ENCODE measurements at regions of chr9 and their contacts with region 1.

Region 1: DNA sequence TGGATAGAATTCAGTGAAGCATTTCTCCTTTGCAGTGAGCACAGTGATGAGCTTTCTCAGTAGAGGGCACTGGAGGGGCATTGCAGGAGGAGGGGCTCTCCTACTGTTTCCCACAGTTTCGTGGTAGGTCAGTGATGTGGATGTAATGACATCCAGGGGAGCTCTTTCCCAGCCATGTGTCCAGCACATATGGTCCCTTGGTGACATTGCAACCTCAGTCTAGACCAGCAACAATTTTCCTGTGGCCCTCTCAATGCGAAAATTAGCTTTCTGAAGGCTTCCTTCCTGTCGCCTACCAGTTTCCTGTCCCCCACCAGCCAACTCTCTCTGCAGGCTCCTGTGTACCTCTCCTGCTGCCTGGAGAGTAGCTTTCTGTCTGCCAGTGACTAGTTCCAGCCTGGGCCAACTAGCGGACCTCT is 6.9 kb upstream of the PDCL start:
- DNase-seq: peak in 5 of 9 donors; percentile 33 to 45 (median 40)
- ATAC-seq: peak; percentile 71
- H3K4me3 ChIP-seq: peak overlapping the region; percentile 38
- H3K4me3 Mint-ChIP-seq: peak overlapping the region; percentile 62 to 88 (median 76)
- H3K27ac ChIP-seq: peak overlapping the region; percentile 48
- H3K27ac Mint-ChIP-seq: peak overlapping the region; percentile 80 to 94 (median 88)
- H3K4me1 ChIP-seq: peaks cover 6 to 11% of the 10 kb centered on the region in 2 donors
- H3K4me1 Mint-ChIP-seq: peaks cover 3 to 28% (median 18%) of the 10 kb centered on the region in 7 donors
- H3K27me3 ChIP-seq: no peaks in the 10 kb centered on the region
- H3K27me3 Mint-ChIP-seq: no peaks in the 10 kb centered on the region

Region 2: DNA sequence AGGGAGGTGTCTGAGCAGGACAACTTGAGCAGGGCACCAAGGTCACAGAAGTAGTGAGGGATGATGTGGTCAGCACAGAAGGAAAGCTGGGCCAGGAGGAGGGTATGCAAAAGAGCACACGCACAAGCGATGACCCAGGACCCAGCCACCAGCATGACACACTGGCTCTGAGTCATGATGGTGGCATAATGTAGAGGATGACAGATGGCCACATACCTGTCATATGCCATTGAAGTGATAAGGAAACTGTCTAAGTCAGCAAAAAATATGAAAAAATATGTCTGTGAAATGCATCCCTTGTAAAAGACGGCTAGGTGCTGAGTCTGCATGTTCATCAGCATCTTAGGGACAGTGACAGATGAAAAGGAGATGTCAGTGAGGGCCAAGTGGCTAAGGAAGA is 358.0 kb before region 1 on chr9:
- CTCF ChIA-PET with region 1: no interaction called
- POLR2A ChIA-PET with region 1: no interaction called
- intact Hi-C with region 1: no loop called
- DNase-seq: no peak
- ATAC-seq: no peak
- H3K4me3 ChIP-seq: no peak overlapping the region
- H3K4me3 Mint-ChIP-seq: no peak overlapping the region
- H3K27ac ChIP-seq: no peak overlapping the region
- H3K27ac Mint-ChIP-seq: no peak overlapping the region
- H3K4me1 ChIP-seq: no peaks in the 10 kb centered on the region
- H3K4me1 Mint-ChIP-seq: no peaks in the 10 kb centered on the region
- H3K27me3 ChIP-seq: no peaks in the 10 kb centered on the region
- H3K27me3 Mint-ChIP-seq: peaks cover 0 to 47% (median 9%) of the 10 kb centered on the region in 5 donors

Region 3: DNA sequence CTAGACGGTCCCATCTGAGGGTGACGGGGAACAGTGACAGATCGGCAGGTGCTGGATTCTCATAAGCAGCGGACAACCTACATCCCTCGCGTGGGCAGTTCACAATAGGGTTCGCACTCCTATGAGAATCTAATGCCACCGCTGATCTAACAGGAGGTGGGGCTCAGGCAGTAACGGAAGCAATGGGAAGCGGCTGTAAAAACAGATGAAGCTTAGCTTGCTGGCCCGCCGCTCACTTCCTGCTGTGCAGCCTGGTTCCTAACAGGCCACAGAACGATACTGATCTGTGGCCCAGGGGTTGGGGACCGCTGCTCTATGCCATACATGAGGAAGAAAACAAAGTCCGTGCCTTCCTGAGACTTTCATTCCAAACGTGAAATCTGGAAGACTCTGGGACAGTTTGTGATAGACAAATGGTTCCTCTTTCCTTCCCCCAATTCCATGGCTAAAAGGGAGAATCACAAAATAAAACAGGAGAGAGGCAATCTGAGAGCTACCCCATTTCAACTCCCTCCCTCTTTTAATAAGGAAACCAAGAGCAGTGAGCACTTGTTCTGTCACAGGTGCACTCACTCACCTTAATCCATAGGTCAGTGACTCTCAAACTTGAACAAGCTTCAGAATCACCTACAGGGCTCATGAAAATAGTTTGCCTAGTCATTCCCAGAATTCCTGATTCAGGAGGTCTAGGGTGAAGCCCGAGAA is 19.0 kb before region 1 on chr9:
- CTCF ChIA-PET with region 1: no interaction called
- POLR2A ChIA-PET with region 1: interaction called, 10 read pairs
- intact Hi-C with region 1: no loop called
- DNase-seq: peak in 8 of 9 donors; percentile 16 to 54 (median 46)
- ATAC-seq: peak; percentile 89
- H3K4me3 ChIP-seq: peak overlapping the region; percentile 29
- H3K4me3 Mint-ChIP-seq: peak overlapping the region; percentile 67 to 89 (median 81)
- H3K27ac ChIP-seq: peak overlapping the region; percentile 69
- H3K27ac Mint-ChIP-seq: peak overlapping the region; percentile 91 to 98 (median 97)
- H3K4me1 ChIP-seq: peaks cover 12% of the 10 kb centered on the region in 2 donors
- H3K4me1 Mint-ChIP-seq: peaks cover 19 to 53% (median 41%) of the 10 kb centered on the region in 7 donors
- H3K27me3 ChIP-seq: no peaks in the 10 kb centered on the region
- H3K27me3 Mint-ChIP-seq: no peaks in the 10 kb centered on the region

Region 4: DNA sequence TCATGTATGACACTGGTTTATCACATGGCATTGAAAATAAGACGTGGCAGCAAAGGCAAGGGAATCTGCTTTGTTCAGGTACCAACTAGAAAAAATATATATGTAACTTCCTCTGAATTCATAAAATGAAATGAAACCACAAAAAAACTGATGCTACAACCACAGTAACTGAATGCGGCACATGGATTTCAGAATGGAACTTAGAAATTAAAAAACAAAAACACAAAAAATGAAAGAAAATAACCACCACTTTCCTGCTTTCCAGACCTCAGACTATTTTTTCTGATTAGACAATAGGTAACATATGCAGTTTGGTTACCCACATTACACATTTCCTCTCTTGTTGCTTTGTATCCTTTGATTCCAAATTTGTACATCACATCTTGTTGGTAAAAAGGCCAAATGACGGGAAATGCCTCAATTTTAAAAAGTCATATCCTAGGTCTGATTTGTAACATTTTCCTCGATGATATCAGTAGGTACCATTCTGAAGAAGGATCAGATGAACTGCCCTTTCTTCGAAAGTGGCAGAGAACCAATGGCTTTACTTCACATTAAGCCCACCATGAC is 11.1 kb after region 1 on chr9:
- CTCF ChIA-PET with region 1: interaction called, 4 read pairs
- POLR2A ChIA-PET with region 1: interaction called, 10 read pairs
- intact Hi-C with region 1: loop called (anchors 1 kb)
- DNase-seq: peak in 7 of 9 donors; percentile 39 to 87 (median 82)
- ATAC-seq: peak; percentile 85
- H3K4me3 ChIP-seq: no peak overlapping the region
- H3K4me3 Mint-ChIP-seq: peak overlapping the region in 8 of 10 donors; percentile 19 to 75 (median 54)
- H3K27ac ChIP-seq: peak overlapping the region; percentile 66
- H3K27ac Mint-ChIP-seq: peak overlapping the region; percentile 88 to 98 (median 91)
- H3K4me1 ChIP-seq: peaks cover 0 to 17% of the 10 kb centered on the region in 2 donors
- H3K4me1 Mint-ChIP-seq: peaks cover 20 to 66% (median 41%) of the 10 kb centered on the region in 7 donors
- H3K27me3 ChIP-seq: no peaks in the 10 kb centered on the region
- H3K27me3 Mint-ChIP-seq: no peaks in the 10 kb centered on the region

Region 5: GRCh38 chr9:122863407-122863806 is 28.1 kb after region 1 on chr9:
- CTCF ChIA-PET with region 1: no interaction called
- POLR2A ChIA-PET with region 1: no interaction called
- intact Hi-C with region 1: loop called in 1 of 2 experiments (anchors 2 kb)
- DNase-seq: no peak
- ATAC-seq: no peak
- H3K4me3 ChIP-seq: no peak overlapping the region
- H3K4me3 Mint-ChIP-seq: no peak overlapping the region
- H3K27ac ChIP-seq: no peak overlapping the region
- H3K27ac Mint-ChIP-seq: peak overlapping the region in 6 of 9 donors; percentile 11 to 42 (median 22)
- H3K4me1 ChIP-seq: no peaks in the 10 kb centered on the region
- H3K4me1 Mint-ChIP-seq: peaks cover 0 to 6% (median 0%) of the 10 kb centered on the region in 7 donors
- H3K27me3 ChIP-seq: no peaks in the 10 kb centered on the region
- H3K27me3 Mint-ChIP-seq: no peaks in the 10 kb centered on the region

Region 6: GRCh38 chr9:122888480-122888879 is 53.2 kb after region 1 on chr9:
- CTCF ChIA-PET with region 1: no interaction called
- POLR2A ChIA-PET with region 1: no interaction called
- intact Hi-C with region 1: no loop called
- DNase-seq: no peak
- ATAC-seq: no peak
- H3K4me3 ChIP-seq: no peak overlapping the region
- H3K4me3 Mint-ChIP-seq: no peak overlapping the region
- H3K27ac ChIP-seq: no peak overlapping the region
- H3K27ac Mint-ChIP-seq: peak overlapping the region in 2 of 9 donors; percentile 13 to 19
- H3K4me1 ChIP-seq: no peaks in the 10 kb centered on the region
- H3K4me1 Mint-ChIP-seq: peaks cover 4 to 6% (median 5%) of the 10 kb centered on the region in 7 donors
- H3K27me3 ChIP-seq: no peaks in the 10 kb centered on the region
- H3K27me3 Mint-ChIP-seq: no peaks in the 10 kb centered on the region

Region 7: GRCh38 chr9:122991370-122991830 is 156.1 kb after region 1 on chr9:
- CTCF ChIA-PET with region 1: no interaction called
- POLR2A ChIA-PET with region 1: no interaction called
- intact Hi-C with region 1: loop called in 1 of 2 experiments (anchors 1 kb)
- DNase-seq: peak in 8 of 9 donors; percentile 1 to 37 (median 14)
- ATAC-seq: peak; percentile 81
- H3K4me3 ChIP-seq: no peak overlapping the region
- H3K4me3 Mint-ChIP-seq: no peak overlapping the region
- H3K27ac ChIP-seq: no peak overlapping the region
- H3K27ac Mint-ChIP-seq: no peak overlapping the region
- H3K4me1 ChIP-seq: no peaks in the 10 kb centered on the region
- H3K4me1 Mint-ChIP-seq: peaks cover 0 to 6% (median 4%) of the 10 kb centered on the region in 7 donors
- H3K27me3 ChIP-seq: no peaks in the 10 kb centered on the region
- H3K27me3 Mint-ChIP-seq: no peaks in the 10 kb centered on the region